Dorsolateral prefrontal cortex (tissue), 120 donors: ENCODE measurements at regions of chr7 and their contacts with region 1.

Region 1: DNA sequence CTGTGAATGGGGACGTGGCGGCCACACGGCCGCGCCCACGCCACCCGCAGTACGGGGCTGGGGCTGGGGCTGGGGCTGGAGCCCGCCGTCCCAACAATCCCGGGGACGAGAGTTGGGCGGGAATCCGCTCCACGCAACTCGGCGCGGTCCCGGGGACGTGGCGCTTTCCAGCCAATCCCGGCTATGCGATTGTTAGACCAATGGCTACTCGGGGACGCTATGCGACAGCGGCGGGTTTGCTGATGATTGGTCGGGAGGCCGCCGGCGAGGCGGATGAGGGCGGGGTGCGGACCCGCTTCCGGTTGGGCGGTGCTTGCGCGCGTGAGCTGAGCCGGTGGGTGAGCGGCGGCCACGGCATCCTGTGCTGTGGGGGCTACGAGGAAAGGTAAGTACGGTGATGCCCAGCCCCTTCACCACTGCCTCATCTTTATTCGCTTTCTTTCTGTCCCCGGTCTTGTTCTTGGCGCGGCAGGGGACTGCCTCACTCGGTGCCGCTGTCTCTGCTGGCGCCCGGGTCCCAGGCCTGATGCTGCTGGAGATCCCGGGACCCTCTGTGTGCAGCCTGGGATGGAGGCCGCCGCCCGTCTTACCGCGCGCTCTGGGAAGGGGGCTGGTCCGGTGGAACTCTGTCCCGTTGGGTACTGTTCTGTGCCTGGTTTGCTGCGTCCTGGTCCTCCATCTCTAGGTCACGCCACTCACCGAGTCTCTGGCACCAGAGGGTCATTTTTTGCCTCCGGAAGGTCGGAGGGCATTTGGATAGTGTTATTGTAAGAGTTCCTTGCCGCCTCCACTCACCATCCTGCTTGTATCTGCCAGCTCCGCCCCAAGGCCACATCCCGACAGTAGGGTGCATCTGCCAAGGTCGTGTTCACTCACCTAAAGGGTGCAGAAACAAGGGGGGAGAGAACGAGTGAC is at the start of gene CALU:
- DNase-seq: peak; percentile 92 to 98 (median 97)
- H3K4me3 ChIP-seq: peak within 1 kb of the TSS; percentile 69 to 100 (median 96)
- H3K27ac ChIP-seq: peak within 1 kb of the TSS in 54 of 59 donors; percentile 16 to 90 (median 66)
- H3K27me3 ChIP-seq: no peaks in the 10 kb centered on the region
- CTCF ChIP-seq: peak in 20 of 56 donors; percentile 8 to 60 (median 34)
- total RNA-seq, gene CALU: 27.1 to 47.0 (median 35.9) TPM

Region 2: DNA sequence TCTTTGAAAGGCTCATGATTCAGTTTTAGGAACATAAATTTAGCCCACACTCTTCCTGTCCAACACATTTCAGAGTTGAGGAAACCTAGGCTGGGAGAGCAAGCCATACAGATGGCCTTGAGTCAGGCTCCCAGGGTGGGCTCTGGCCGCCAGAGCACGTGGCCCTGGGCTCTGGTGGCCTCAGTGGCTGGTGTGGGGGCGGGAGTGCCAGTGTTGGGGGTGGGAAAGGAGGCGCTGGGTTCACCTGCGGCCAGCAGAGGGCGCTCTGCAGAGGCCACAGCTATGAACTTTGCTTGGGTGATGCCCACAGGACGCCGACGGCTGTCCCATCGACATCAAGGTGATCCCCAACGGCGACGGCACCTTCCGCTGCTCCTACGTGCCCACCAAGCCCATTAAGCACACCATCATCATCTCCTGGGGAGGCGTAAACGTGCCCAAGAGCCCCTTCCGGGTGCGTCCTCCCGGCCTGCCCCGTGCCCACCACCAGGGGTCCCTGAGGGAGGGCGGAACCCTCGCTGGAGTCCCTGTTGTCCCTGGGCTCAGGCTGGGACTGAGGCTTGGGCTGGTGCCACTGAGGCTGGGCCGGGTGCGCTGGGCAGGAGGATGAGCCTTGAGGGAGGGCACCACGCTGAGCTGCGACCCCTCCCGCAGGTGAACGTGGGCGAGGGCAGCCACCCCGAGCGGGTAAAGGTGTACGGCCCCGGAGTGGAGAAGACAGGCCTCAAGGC is 102.8 kb after region 1 on chr7:
- intact Hi-C with region 1: loop called in 1 of 2 experiments (anchors 5 kb)
- DNase-seq: peak in 1 of 10 donors; percentile 39
- H3K4me3 ChIP-seq: no peak overlapping the region
- H3K27ac ChIP-seq: peak overlapping the region in 1 of 59 donors; percentile 4
- H3K27me3 ChIP-seq: no peaks in the 10 kb centered on the region
- CTCF ChIP-seq: peak; percentile 31 to 80 (median 68)

Region 3: GRCh38 chr7:128858380-128859231 is 119.3 kb after region 1 on chr7:
- intact Hi-C with region 1: no loop called
- DNase-seq: no peak
- H3K4me3 ChIP-seq: no peak overlapping the region
- H3K27ac ChIP-seq: peak overlapping the region in 9 of 59 donors; percentile 14 to 61 (median 33)
- H3K27me3 ChIP-seq: no peaks in the 10 kb centered on the region
- CTCF ChIP-seq: no peak

Region 4: GRCh38 chr7:128869138-128869943 is 130.0 kb after region 1 on chr7:
- intact Hi-C with region 1: loop called (anchors 5 kb)
- DNase-seq: peak in 7 of 10 donors; percentile 23 to 78 (median 53)
- H3K4me3 ChIP-seq: peak overlapping the region; percentile 55 to 82 (median 71)
- H3K27ac ChIP-seq: peak overlapping the region in 52 of 59 donors; percentile 6 to 90 (median 71)
- H3K27me3 ChIP-seq: no peaks in the 10 kb centered on the region
- CTCF ChIP-seq: peak in 16 of 56 donors; percentile 5 to 40 (median 25)

Region 5: DNA sequence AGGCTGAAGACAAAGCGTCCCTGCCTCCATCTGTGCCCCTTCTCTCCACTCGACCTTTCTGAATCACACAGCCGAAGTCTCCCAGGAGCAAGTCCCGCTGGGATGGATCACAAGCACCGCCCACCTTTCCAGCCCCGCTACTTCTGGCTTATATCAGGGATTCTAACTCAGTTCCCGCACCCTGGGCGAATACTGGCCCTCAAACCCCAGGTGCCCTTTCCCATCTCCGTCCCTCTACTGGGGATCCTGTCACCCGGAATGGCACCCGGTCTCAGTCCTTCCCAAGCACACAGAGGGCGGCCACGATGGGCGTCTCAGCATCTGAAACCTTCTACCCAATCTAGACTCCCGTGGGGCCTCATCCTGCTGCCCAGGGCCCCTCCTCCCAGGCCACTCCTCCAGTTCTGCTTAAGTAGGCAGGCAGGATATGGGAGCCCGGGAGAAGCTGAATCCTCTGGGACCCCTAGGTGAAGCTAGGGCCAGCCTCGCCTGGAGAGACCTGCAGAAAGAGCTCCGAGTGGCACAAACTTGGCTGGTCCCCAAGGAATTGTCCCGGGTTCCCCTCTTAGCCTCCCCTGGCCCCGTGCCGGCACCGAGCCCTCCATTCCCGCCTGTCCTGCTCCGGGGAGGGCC is 170.4 kb after region 1 on chr7:
- intact Hi-C with region 1: no loop called
- DNase-seq: peak in 1 of 10 donors; percentile 19
- H3K4me3 ChIP-seq: peak overlapping the region in 31 of 59 donors; percentile 3 to 56 (median 29)
- H3K27ac ChIP-seq: no peak overlapping the region
- H3K27me3 ChIP-seq: peaks cover 0 to 63% (median 30%) of the 10 kb centered on the region in 45 donors
- CTCF ChIP-seq: no peak